T-cell (primary cell): ENCODE measurements at regions of chr19 and their contacts with region 1.

Region 1: GRCh38 chr19:39474139-39474622 is 6.5 kb upstream of the TIMM50 start:
- DNase-seq: peak; percentile 42 to 82 (median 69)
- ATAC-seq: peak; percentile 71 to 81 (median 75)
- H3K4me3 ChIP-seq: no peak overlapping the region
- H3K4me3 Mint-ChIP-seq: no peak overlapping the region
- H3K27ac ChIP-seq: peak overlapping the region; percentile 4
- H3K27ac Mint-ChIP-seq: peak overlapping the region in 1 of 2 donors; percentile 34
- H3K4me1 ChIP-seq: no peaks in the 10 kb centered on the region
- H3K4me1 Mint-ChIP-seq: peaks cover 0 to 14% (median 0%) of the 10 kb centered on the region in 3 donors
- H3K27me3 ChIP-seq: no peaks in the 10 kb centered on the region
- H3K27me3 Mint-ChIP-seq: no peaks in the 10 kb centered on the region

Region 2: GRCh38 chr19:39445265-39446111 is 28.7 kb before region 1 on chr19 and contains the start of gene SUPT5H:
- CTCF ChIA-PET with region 1: interaction called, 3 to 11 read pairs
- POLR2A ChIA-PET with region 1: no interaction called
- DNase-seq: peak; percentile 88 to 100 (median 98)
- ATAC-seq: peak; percentile 96 to 97 (median 97)
- H3K4me3 ChIP-seq: peak within 1 kb of the TSS; percentile 96 to 99
- H3K4me3 Mint-ChIP-seq: peak within 1 kb of the TSS; percentile 94 to 96 (median 96)
- H3K27ac ChIP-seq: peak within 1 kb of the TSS; percentile 91
- H3K27ac Mint-ChIP-seq: peak within 1 kb of the TSS; percentile 94 to 97
- H3K4me1 ChIP-seq: peaks cover 11 to 63% of the 10 kb centered on the region in 2 experiments
- H3K4me1 Mint-ChIP-seq: peaks cover 55 to 58% (median 58%) of the 10 kb centered on the region in 3 donors
- H3K27me3 ChIP-seq: no peaks in the 10 kb centered on the region
- H3K27me3 Mint-ChIP-seq: no peaks in the 10 kb centered on the region
- total RNA-seq, gene SUPT5H: 180 to 301 (median 194) TPM

Region 3: DNA sequence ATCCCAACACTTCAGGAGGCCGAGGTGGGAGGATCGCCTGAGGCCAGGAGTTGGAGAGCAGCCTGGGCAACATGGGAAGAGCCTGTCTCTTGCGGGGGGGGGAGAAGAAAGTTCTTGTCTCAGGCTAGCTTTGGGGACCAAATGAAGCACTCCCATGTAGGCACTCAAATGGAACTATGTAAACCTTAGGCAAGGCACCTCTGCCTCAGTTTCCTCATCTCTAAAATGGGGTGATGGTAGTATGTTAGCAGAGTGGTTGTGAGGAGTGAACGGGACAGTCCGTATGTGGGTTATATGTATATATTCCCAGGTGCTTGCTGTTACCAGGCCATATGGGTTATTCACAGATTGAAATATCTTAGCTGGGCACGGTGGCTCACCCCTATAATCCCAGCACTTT is 18.0 kb after region 1 on chr19:
- CTCF ChIA-PET with region 1: interaction called in 1 of 2 experiments, 10 read pairs
- POLR2A ChIA-PET with region 1: no interaction called
- DNase-seq: no peak
- ATAC-seq: no peak
- H3K4me3 ChIP-seq: no peak overlapping the region
- H3K4me3 Mint-ChIP-seq: no peak overlapping the region
- H3K27ac ChIP-seq: no peak overlapping the region
- H3K27ac Mint-ChIP-seq: no peak overlapping the region
- H3K4me1 ChIP-seq: no peaks in the 10 kb centered on the region
- H3K4me1 Mint-ChIP-seq: no peaks in the 10 kb centered on the region
- H3K27me3 ChIP-seq: peaks cover 0 to 14% of the 10 kb centered on the region in 2 experiments
- H3K27me3 Mint-ChIP-seq: peaks cover 6 to 9% of the 10 kb centered on the region in 2 donors

Region 4: GRCh38 chr19:39532233-39533002 is 58.2 kb after region 1 on chr19 and contains the start of gene EID2B:
- CTCF ChIA-PET with region 1: interaction called in 1 of 2 experiments, 11 read pairs
- POLR2A ChIA-PET with region 1: no interaction called
- DNase-seq: peak; percentile 83 to 99 (median 91)
- ATAC-seq: peak; percentile 91 to 94 (median 94)
- H3K4me3 ChIP-seq: peak within 1 kb of the TSS; percentile 88 to 90
- H3K4me3 Mint-ChIP-seq: peak within 1 kb of the TSS; percentile 85 to 92 (median 90)
- H3K27ac ChIP-seq: peak within 1 kb of the TSS; percentile 54
- H3K27ac Mint-ChIP-seq: peak within 1 kb of the TSS; percentile 79 to 90
- H3K4me1 ChIP-seq: peaks cover 5 to 17% of the 10 kb centered on the region in 2 experiments
- H3K4me1 Mint-ChIP-seq: peaks cover 32 to 43% (median 38%) of the 10 kb centered on the region in 3 donors
- H3K27me3 ChIP-seq: no peaks in the 10 kb centered on the region
- H3K27me3 Mint-ChIP-seq: no peaks in the 10 kb centered on the region
- total RNA-seq, gene EID2B: 4.1 to 6.3 (median 5.8) TPM